Thyroid gland (tissue), 4 donors: ENCODE measurements at regions of chr3 and their contacts with region 1.

Region 1: DNA sequence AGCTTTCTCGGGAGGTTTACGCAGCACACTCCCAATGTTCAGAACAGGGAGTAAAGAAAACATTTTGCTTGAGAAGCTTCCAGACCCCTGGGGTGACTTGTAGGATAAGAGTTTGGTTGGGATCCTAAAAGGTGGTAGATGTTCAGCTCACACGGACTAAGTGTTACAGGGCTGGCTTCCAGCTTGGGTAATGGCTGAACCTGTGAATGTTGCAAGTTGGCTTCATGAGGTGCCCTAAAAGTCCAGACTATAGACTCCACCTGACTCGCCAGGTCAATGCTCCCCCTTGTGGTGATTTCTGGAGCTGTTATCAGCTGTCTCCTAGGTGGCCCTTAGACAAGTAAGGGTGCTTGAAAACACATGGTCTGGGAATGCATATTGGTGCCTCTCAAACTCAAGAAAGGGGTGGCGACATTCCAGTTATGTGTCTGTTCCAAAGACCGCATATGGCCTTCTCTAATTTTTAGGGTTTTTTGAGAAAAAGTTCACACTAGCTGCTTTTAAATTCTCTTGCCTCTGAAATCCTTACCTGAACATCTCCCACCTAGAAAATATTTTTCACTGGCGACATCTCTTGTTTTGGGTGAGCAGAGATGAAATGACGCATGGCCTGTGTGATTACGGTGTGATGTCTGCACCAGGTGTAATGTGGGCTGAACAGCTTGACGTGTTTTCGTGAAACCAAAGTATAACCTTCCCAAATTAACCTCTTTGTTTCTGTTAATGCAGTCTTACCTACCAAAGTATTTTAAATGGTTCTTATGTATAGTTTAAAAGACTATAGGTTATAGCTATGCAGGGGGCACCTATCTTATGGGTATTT is 175.7 kb upstream of the KBTBD8 start:
- DNase-seq: peak; percentile 79 to 80
- H3K4me3 ChIP-seq: no peak overlapping the region
- H3K27ac ChIP-seq: no peak overlapping the region
- H3K4me1 ChIP-seq: no peaks in the 10 kb centered on the region
- H3K27me3 ChIP-seq: no peaks in the 10 kb centered on the region
- CTCF ChIP-seq: peak; percentile 42 to 81 (median 72)
- POLR2A ChIP-seq: no peak

Region 2: DNA sequence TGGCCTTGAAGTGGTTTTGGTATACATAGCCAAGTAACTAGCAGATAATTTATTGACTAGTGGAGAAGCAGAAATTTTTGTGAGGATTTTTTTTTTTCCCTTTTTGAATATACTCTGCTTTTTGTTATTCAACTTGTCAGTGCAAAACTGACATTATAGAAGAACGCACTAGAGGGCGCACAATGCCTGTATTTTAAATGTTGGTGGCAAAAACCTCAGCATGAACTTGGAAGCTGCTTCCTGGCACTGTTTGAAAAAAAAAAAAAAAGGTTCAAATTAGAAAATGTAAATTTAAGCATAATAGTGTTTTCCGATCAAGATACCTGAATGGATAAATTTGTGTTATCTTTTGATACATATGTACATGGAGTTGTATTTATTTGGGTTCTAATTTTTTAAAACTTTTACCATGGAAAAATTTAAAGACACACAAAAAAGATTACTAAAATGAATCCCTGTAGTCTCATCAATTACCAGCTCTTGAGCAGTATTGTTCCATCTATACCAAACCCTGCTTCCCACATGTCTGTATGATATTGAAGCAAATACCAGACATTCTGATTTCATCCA is 545.6 kb before region 1 on chr3:
- intact Hi-C with region 1: loop called (anchors 5 kb)
- DNase-seq: peak; percentile 54 to 66
- H3K4me3 ChIP-seq: no peak overlapping the region
- H3K27ac ChIP-seq: no peak overlapping the region
- H3K4me1 ChIP-seq: no peaks in the 10 kb centered on the region
- H3K27me3 ChIP-seq: no peaks in the 10 kb centered on the region
- CTCF ChIP-seq: peak in 5 of 6 experiments; percentile 44 to 81 (median 59)
- POLR2A ChIP-seq: no peak

Region 3: DNA sequence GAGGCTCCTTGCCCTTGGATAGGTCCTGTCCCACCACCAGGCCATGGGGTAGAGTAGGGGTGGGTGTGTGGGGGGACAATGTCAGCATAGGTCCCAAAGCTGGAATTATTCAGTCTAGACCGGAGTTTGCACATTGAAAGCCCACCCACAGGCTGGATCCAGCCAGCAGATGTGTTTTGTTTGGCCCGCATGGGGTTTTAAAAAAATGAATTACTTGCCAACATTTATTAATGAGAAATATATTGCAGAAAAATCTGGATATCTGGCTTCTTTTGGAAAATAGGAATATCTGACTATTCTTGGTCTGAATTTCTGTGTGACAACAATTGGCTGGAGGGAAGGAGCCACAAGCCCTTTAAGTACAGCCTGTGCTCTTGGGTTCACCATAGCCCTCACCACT is 304.3 kb before region 1 on chr3:
- intact Hi-C with region 1: loop called (anchors 10 kb)
- DNase-seq: no peak
- H3K4me3 ChIP-seq: no peak overlapping the region
- H3K27ac ChIP-seq: no peak overlapping the region
- H3K4me1 ChIP-seq: no peaks in the 10 kb centered on the region
- H3K27me3 ChIP-seq: no peaks in the 10 kb centered on the region
- CTCF ChIP-seq: no peak
- POLR2A ChIP-seq: no peak